Caco-2 (cell line): ENCODE measurements at regions of chr6 and their contacts with region 1.

Region 1: GRCh38 chr6:143450453-143451371 is at the starts of genes ADAT2 and PEX3:
- DNase-seq: peak; percentile 95
- H3K4me3 ChIP-seq: peak within 1 kb of the TSS; percentile 69
- H3K4me3 Mint-ChIP-seq: peak within 1 kb of the TSS; percentile 95
- H3K27ac Mint-ChIP-seq: peak within 1 kb of the TSS; percentile 98
- H3K4me1 ChIP-seq: peaks cover 11% of the 10 kb centered on the region
- H3K4me1 Mint-ChIP-seq: peaks cover 11% of the 10 kb centered on the region
- H3K27me3 ChIP-seq: no peaks in the 10 kb centered on the region
- H3K27me3 Mint-ChIP-seq: no peaks in the 10 kb centered on the region
- CTCF ChIP-seq: no peak
- total RNA-seq, gene ADAT2: 12.7 and 13.9 TPM in 2 replicates
- total RNA-seq, gene PEX3: 44.6 and 46.6 TPM in 2 replicates

Region 2: DNA sequence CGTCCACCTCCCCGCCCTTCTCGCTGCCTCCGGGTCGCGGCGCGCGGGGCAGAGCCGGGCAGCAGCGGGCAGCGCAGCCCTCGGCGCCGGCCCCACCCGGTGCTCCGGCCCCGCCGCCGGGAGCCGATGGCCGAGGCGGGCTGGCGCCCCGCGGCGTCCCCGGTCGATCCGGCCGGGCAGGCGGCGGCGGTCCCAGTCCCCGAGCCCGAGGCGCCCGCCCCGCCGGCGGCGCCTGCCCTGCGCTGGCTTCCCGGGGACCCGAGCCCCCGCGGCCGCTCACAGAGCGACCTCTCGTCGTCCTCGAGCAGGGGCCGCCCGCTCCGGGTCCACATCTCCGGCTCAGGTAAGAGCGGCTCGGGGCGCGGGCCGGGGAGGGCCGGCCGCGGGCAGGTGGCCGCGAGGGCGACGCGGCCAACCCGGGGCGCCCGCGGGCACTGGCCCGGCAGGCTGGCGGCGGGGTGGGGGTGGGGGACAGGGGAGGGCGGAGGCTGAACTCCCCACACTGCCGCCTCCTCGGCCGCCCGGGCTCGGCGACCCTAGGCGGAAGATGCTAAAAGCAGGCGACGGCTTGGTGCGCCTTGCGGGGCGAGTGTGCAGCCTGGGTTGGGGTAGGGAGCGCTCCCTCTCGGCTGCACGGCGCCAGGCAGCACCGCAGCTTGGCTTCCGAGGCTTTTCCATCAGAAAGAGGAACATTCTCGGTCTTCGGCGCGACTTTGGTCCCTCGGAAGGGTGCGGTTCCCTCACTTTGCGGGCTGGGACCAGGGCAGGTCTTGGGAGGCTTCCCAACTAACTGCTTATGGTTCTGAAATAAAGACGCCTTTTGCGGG is 86.4 kb after region 1 on chr6:
- CTCF ChIA-PET with region 1: no interaction called
- POLR2A ChIA-PET with region 1: no interaction called
- intact Hi-C with region 1: loop called (anchors 2 kb)
- DNase-seq: peak; percentile 78 to 84
- H3K4me3 ChIP-seq: peak overlapping the region; percentile 39
- H3K4me3 Mint-ChIP-seq: peak overlapping the region; percentile 82
- H3K27ac Mint-ChIP-seq: peak overlapping the region; percentile 84
- H3K4me1 ChIP-seq: peaks cover 61% of the 10 kb centered on the region
- H3K4me1 Mint-ChIP-seq: peaks cover 24% of the 10 kb centered on the region
- H3K27me3 ChIP-seq: no peaks in the 10 kb centered on the region
- H3K27me3 Mint-ChIP-seq: no peaks in the 10 kb centered on the region
- CTCF ChIP-seq: peak; percentile 19 to 63

Region 3: DNA sequence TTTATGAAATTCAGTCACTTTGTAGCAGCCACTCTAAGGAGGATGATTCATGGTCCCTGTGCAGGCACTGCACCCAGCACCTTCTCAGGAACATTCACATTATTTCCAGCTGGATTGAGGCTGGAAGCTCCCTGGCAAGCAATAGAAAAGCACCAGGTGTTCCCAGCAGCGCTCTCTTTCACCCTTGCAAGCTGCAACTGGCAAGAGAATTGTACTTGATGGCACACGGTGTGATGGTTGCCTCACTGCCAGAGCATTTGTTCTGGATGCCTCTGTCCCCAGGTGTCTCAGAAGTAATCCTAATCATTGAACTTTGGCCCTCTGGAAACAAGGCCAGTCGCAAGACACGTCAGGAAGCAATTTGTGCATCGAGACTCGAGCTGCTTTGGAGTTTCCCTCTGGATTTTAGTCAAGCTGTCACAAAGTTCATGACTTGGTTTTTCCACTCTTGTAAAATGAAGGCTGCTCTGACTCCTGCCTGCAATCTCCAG is 202.2 kb after region 1 on chr6:
- CTCF ChIA-PET with region 1: no interaction called
- POLR2A ChIA-PET with region 1: no interaction called
- intact Hi-C with region 1: loop called (anchors 5 kb)
- DNase-seq: peak; percentile 59 to 71
- H3K4me3 ChIP-seq: no peak overlapping the region
- H3K4me3 Mint-ChIP-seq: peak overlapping the region; percentile 51
- H3K27ac Mint-ChIP-seq: peak overlapping the region; percentile 84
- H3K4me1 ChIP-seq: peaks cover 43% of the 10 kb centered on the region
- H3K4me1 Mint-ChIP-seq: peaks cover 45% of the 10 kb centered on the region
- H3K27me3 ChIP-seq: no peaks in the 10 kb centered on the region
- H3K27me3 Mint-ChIP-seq: no peaks in the 10 kb centered on the region
- CTCF ChIP-seq: no peak